Gastrocnemius medialis (tissue), 4 donors: ENCODE measurements at regions of chr7 and their contacts with region 1.

Region 1: GRCh38 chr7:30026229-30027064 is at the start of gene FKBP14:
- DNase-seq: peak; percentile 98
- ATAC-seq: peak; percentile 90 to 94
- H3K4me3 ChIP-seq: peak within 1 kb of the TSS; percentile 73 to 94 (median 89)
- H3K27ac ChIP-seq: peak within 1 kb of the TSS; percentile 80 to 94 (median 93)
- H3K4me1 ChIP-seq: peaks cover 31 to 36% of the 10 kb centered on the region in 2 donors
- H3K27me3 ChIP-seq: no peaks in the 10 kb centered on the region
- CTCF ChIP-seq: no peak
- POLR2A ChIP-seq: peak in 1 of 2 donors; percentile 48
- total RNA-seq, gene FKBP14: 1.4 to 2.4 (median 1.5) TPM

Region 2: DNA sequence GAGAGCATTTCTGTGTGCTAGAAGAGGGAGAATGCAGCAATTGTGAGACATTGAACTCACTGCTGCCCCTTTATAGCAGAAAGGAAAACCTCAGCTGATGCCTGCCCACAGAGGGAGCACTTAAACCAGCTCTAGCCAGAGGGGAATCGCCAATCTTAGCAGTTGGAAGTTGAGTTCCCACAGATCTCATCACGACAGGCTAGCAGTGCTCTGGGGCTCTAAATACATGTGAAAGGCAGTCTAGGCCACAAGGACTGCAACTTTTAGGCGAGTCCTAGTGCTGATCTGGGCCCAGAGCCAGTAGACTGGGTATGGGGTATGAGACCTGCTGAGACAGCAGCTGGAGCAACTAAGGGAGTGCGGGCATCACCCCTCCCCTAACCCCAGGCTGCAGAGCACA is 488.1 kb before region 1 on chr7:
- in situ Hi-C with region 1: no loop called
- intact Hi-C with region 1: no loop called
- DNase-seq: no peak
- ATAC-seq: no peak
- H3K4me3 ChIP-seq: no peak overlapping the region
- H3K27ac ChIP-seq: no peak overlapping the region
- H3K4me1 ChIP-seq: no peaks in the 10 kb centered on the region
- H3K27me3 ChIP-seq: no peaks in the 10 kb centered on the region
- CTCF ChIP-seq: no peak
- POLR2A ChIP-seq: no peak

Region 3: GRCh38 chr7:29684787-29685650 is 341.4 kb before region 1 on chr7:
- in situ Hi-C with region 1: no loop called
- intact Hi-C with region 1: loop called (anchors 10 kb)
- DNase-seq: peak; percentile 53 to 82
- ATAC-seq: peak; percentile 85 to 93
- H3K4me3 ChIP-seq: peak overlapping the region; percentile 75 to 88 (median 82)
- H3K27ac ChIP-seq: peak overlapping the region; percentile 86 to 95 (median 90)
- H3K4me1 ChIP-seq: peaks cover 8 to 12% of the 10 kb centered on the region in 2 donors
- H3K27me3 ChIP-seq: no peaks in the 10 kb centered on the region
- CTCF ChIP-seq: peak in 1 of 5 experiments; percentile 22
- POLR2A ChIP-seq: peak; percentile 36 to 60

Region 4: GRCh38 chr7:29859524-29860185 is 166.8 kb before region 1 on chr7:
- in situ Hi-C with region 1: no loop called
- intact Hi-C with region 1: loop called (anchors 5 kb)
- DNase-seq: no peak
- ATAC-seq: no peak
- H3K4me3 ChIP-seq: no peak overlapping the region
- H3K27ac ChIP-seq: peak overlapping the region; percentile 82 to 96 (median 92)
- H3K4me1 ChIP-seq: peaks cover 72 to 93% of the 10 kb centered on the region in 2 donors
- H3K27me3 ChIP-seq: no peaks in the 10 kb centered on the region
- CTCF ChIP-seq: no peak
- POLR2A ChIP-seq: no peak

Region 5: DNA sequence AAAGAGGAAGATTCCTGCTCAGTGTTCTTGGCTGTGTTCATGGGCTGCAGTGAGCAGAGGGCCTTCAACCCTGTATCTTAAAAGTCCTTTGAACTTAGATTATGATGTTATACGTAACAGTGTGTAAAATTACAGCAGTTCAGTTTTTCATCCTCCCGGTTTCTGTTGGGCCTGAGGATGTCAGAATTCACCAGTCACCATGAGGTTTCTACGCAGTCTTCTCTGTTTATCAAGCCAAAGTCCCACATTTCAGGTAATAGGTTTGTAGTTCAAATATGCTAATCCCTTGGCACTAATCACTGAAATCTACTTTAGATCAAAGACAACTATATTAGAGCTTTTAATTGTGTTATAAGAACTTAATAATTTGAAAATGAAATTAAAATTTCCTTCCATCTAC is 26.6 kb after region 1 on chr7:
- in situ Hi-C with region 1: no loop called
- intact Hi-C with region 1: no loop called
- DNase-seq: no peak
- ATAC-seq: no peak
- H3K4me3 ChIP-seq: no peak overlapping the region
- H3K27ac ChIP-seq: no peak overlapping the region
- H3K4me1 ChIP-seq: no peaks in the 10 kb centered on the region
- H3K27me3 ChIP-seq: no peaks in the 10 kb centered on the region
- CTCF ChIP-seq: no peak
- POLR2A ChIP-seq: no peak

Region 6: GRCh38 chr7:30134611-30135545 is 108.4 kb after region 1 on chr7 and contains the start of gene MTURN:
- in situ Hi-C with region 1: no loop called
- intact Hi-C with region 1: loop called (anchors 1 kb)
- DNase-seq: peak; percentile 74 to 81
- ATAC-seq: peak; percentile 88 to 89
- H3K4me3 ChIP-seq: peak within 1 kb of the TSS; percentile 83 to 88 (median 86)
- H3K27ac ChIP-seq: peak within 1 kb of the TSS; percentile 78 to 95 (median 88)
- H3K4me1 ChIP-seq: peaks cover 13 to 31% of the 10 kb centered on the region in 2 donors
- H3K27me3 ChIP-seq: no peaks in the 10 kb centered on the region
- CTCF ChIP-seq: no peak
- POLR2A ChIP-seq: peak; percentile 59 to 70
- total RNA-seq, gene MTURN: 32.9 to 81.9 (median 44.7) TPM

Region 7: GRCh38 chr7:30478349-30479201 is 452.1 kb after region 1 on chr7 and contains the start of gene NOD1:
- in situ Hi-C with region 1: no loop called
- intact Hi-C with region 1: loop called (anchors 5 kb)
- DNase-seq: peak; percentile 52 to 66
- ATAC-seq: peak; percentile 88 to 92
- H3K4me3 ChIP-seq: peak within 1 kb of the TSS; percentile 68 to 97 (median 86)
- H3K27ac ChIP-seq: peak within 1 kb of the TSS; percentile 78 to 95 (median 89)
- H3K4me1 ChIP-seq: peaks cover 23 to 40% of the 10 kb centered on the region in 2 donors
- H3K27me3 ChIP-seq: no peaks in the 10 kb centered on the region
- CTCF ChIP-seq: peak in 1 of 5 experiments; percentile 18
- POLR2A ChIP-seq: peak; percentile 25 to 48
- total RNA-seq, gene NOD1: 2.3 to 4.6 (median 3.6) TPM